Right cardiac atrium (tissue), 5 donors: ENCODE measurements at regions of chr16 and their contacts with region 1.

Region 1: DNA sequence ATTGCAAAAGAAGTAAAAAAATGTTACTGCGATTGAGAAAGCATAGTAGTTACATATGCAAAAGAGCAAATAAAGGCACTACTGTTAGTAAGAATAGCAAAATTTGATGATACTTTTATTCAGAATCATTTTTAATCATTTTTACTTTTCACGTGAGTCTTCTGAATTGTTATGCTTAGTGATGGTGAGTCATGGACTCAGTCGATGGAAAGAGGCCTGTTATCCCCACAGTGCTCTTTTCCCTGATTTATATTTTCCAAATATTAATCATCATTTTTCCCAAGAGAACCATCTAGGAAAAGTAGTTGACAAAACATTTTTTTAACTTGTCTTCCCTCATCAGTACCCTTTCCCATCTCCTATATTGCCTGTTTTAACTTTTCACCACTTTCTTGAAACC is 181.1 kb downstream of the CHD9 start:
- DNase-seq: no peak
- ATAC-seq: no peak
- H3K4me3 ChIP-seq: no peak overlapping the region
- H3K27ac ChIP-seq: no peak overlapping the region
- H3K4me1 ChIP-seq: no peaks in the 10 kb centered on the region
- H3K27me3 ChIP-seq: no peaks in the 10 kb centered on the region

Region 2: DNA sequence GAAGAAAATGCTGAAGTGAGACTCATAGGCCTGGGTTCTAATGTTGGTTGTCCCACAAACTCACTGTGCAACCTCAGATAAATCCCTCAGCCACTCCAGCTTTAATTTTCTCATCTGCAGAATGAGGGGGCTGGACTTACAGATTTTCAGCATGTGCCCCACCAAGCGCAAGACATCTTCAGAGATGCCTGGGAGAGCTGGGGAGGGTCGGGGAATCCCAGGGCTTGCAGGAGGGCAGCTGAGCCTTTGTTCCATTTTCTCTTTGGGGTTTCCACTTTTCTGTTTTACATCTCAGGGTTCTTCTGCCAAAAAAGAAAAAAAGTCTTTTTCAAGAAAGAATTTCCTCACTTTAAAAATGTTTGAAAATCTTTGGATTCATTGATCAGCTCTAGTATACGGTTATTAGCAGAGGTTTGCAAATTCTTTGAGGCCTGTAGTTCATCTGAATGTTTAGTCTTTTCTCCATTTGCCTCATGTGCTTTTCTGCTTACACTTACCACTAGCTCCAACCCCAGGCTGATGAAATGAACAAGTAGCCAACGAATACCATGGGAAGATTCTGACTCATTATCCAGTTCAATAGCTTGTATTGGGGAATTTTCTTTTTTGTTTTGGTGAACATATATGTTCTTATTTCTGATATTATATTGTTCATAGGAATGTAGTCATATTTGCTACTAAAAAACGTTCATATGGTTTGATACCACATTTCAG is 124.6 kb before region 1 on chr16:
- intact Hi-C with region 1: no loop called
- DNase-seq: no peak
- ATAC-seq: no peak
- H3K4me3 ChIP-seq: no peak overlapping the region
- H3K27ac ChIP-seq: no peak overlapping the region
- H3K4me1 ChIP-seq: no peaks in the 10 kb centered on the region
- H3K27me3 ChIP-seq: no peaks in the 10 kb centered on the region

Region 3: DNA sequence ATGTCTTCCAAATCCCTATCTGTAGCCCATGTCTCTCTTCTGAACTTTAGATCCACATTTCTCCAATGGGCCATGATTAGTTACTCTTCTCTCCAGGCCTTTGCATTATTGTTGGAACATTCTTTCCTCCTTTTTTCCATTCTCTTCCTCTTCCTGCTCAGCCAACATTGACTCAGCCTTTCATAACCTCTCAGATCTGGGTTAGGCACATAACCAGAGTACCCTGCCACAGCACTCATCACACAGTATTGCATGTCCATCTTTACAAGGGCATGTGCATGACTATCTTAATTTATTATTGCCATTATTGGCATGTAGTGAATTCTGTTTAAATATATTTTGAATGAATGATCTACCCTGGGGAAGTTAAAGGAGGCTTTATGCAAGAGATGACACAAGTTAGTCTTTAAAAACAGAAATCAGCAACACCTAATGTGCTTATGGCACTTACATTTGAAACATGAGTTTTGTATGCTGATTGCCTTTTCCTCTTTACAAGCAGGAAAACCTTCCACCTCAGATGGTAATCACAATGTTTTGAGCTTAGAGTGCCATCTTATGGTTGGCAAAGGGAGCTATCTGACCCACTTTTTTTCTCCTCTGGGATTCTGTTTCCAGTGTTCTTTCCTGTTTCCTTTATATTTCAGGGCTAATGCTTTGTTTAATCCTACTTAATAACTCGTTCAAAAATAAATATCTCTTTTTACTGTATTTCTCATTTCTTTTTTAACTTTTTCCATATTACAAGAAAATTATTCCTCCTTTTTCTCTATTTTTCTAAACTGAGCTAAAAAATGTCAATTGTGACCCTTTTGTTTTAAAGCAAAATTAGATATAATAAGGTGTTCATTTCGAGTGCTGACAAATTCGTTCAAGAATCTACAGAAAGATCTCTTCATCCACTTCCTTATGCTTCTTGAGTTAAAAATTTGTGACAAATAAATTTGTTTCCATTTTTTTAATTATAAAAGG is 47.4 kb after region 1 on chr16:
- intact Hi-C with region 1: loop called in 1 of 4 experiments (anchors 5 kb)
- DNase-seq: no peak
- ATAC-seq: peak in 1 of 2 donors; percentile 55
- H3K4me3 ChIP-seq: no peak overlapping the region
- H3K27ac ChIP-seq: no peak overlapping the region
- H3K4me1 ChIP-seq: no peaks in the 10 kb centered on the region
- H3K27me3 ChIP-seq: no peaks in the 10 kb centered on the region